Caco-2 (cell line): ENCODE measurements at regions of chr14 and their contacts with region 1.

Region 1: DNA sequence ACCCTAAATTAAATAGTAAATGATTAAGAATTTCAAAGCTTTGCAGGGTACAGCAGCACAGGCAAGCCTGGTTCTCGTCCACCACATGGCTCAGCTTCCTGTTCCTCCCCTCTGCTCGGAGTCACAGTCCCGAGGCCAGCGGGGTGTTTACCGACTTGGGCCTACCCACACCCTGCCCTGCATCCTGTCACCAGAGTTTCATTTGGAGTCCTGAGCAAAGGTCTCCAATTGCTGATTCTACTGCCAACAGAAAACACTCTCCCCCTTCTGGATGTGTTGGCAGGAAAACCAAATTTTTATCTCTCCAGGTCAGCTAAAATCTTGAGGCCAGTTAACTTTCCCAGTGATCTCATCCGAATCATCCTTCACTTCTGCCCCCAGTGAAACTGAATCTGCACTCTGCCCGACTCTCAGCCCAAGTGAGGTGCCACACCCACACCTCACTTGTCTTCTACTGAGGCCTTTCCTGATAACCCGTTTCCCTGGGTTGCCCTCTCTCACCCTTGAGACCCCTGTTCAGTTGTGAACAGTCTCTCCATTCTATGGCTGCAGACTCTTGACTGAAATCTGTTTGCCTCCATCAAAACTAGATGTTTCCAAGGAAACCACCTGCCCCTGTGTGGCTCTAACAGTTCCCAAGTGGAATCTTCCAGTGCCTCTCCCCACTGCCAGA is 71.2 kb downstream of the VCPKMT start:
- DNase-seq: peak; percentile 7 to 64
- H3K4me3 ChIP-seq: no peak overlapping the region
- H3K4me3 Mint-ChIP-seq: no peak overlapping the region
- H3K27ac Mint-ChIP-seq: peak overlapping the region; percentile 36
- H3K4me1 ChIP-seq: peaks cover 58% of the 10 kb centered on the region
- H3K4me1 Mint-ChIP-seq: peaks cover 31% of the 10 kb centered on the region
- H3K27me3 ChIP-seq: no peaks in the 10 kb centered on the region
- H3K27me3 Mint-ChIP-seq: no peaks in the 10 kb centered on the region
- CTCF ChIP-seq: no peak

Region 2: GRCh38 chr14:50263321-50263720 is 218.1 kb after region 1 on chr14:
- CTCF ChIA-PET with region 1: no interaction called
- POLR2A ChIA-PET with region 1: no interaction called
- intact Hi-C with region 1: no loop called
- DNase-seq: no peak
- H3K4me3 ChIP-seq: no peak overlapping the region
- H3K4me3 Mint-ChIP-seq: no peak overlapping the region
- H3K27ac Mint-ChIP-seq: no peak overlapping the region
- H3K4me1 ChIP-seq: no peaks in the 10 kb centered on the region
- H3K4me1 Mint-ChIP-seq: no peaks in the 10 kb centered on the region
- H3K27me3 ChIP-seq: no peaks in the 10 kb centered on the region
- H3K27me3 Mint-ChIP-seq: no peaks in the 10 kb centered on the region
- CTCF ChIP-seq: no peak

Region 3: GRCh38 chr14:50333006-50333509 is 287.9 kb after region 1 on chr14:
- CTCF ChIA-PET with region 1: interaction called, 13 read pairs
- POLR2A ChIA-PET with region 1: no interaction called
- intact Hi-C with region 1: no loop called
- DNase-seq: peak in 1 of 2 experiments; percentile 14
- H3K4me3 ChIP-seq: no peak overlapping the region
- H3K4me3 Mint-ChIP-seq: no peak overlapping the region
- H3K27ac Mint-ChIP-seq: no peak overlapping the region
- H3K4me1 ChIP-seq: peaks cover 11% of the 10 kb centered on the region
- H3K4me1 Mint-ChIP-seq: peaks cover 12% of the 10 kb centered on the region
- H3K27me3 ChIP-seq: no peaks in the 10 kb centered on the region
- H3K27me3 Mint-ChIP-seq: no peaks in the 10 kb centered on the region
- CTCF ChIP-seq: no peak